ENCODE measurements at regions of chr14 and their contacts with region 1.

Region 1: DNA sequence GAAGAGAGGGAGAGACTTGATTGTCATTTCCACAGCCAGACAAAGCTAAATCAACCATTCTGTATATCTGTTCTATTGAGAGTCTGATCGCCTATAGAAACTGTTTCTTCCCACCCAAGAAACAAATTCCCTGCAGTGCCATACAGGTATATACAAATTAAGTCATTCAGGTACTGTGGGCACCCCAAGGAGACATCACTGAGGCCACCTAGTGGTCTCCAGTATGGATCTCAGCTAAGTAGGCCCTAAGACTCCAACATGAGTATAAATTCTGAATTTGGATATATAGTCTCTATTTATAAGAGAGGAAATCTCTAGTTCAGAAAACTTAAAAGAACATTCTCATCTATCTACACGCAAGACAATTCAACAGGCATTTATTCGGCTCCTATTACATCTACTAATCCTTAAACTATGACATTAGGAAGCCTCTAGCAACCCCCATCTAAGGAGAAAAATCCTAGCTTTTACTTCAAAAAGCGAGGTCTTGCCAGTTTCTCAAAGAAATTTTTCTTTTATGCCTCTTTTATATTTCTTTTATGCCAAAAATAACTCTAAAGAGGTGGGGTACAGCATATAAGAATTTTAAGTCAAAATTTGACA is 62.6 kb downstream of the DCAF5 start:
- DNase-seq: no peak
- H3K4me3 ChIP-seq: no peak overlapping the region
- CTCF ChIP-seq: peak; percentile 70

Region 2: GRCh38 chr14:68862954-68863594 is 227.2 kb before region 1 on chr14:
- CTCF ChIA-PET with region 1: interaction called, 22 read pairs
- POLR2A ChIA-PET with region 1: no interaction called
- DNase-seq: peak; percentile 16
- H3K4me3 ChIP-seq: no peak overlapping the region
- CTCF ChIP-seq: peak; percentile 81

Region 3: DNA sequence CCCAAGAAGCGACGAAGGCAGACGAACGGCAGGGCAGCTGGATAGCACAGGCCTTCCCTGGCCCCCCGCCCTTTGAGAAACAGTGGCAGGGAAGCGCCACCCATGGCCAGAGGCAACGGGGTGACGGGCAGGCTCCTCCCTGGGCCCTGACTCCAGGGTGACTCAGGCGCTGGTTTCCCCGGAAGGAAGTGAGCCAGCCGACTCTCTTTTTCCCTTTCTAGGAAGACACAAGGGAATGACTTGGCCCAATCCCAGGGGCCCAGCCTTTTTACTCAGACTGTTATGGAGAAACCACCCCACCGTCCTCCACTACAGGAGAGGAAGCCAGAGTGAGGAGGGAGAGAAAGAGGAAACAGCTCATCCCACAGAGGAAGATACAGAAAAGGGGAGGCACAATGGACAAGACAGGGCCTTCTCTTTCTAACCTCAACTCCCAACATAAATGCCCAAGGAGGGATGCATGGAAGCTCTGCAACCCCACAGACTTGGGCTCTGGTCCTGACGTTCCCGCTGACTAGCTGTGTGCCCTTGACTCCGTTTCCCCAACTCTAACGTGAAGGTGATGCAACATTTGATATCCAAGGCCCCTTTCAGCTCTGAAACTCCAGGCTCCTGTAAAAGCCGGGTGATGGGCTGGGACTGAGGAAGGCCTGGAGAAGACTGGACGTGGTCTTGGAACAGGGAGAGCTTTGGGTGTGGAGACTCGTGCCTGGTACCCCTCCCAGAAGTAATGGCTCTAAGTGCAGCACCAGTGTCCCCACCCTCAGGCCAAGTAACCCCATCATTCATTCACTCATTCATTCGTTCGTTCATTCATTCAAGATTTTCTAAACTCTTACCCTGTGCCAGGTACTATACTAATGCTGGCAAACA is 139.0 kb before region 1 on chr14:
- CTCF ChIA-PET with region 1: interaction called, 14 read pairs
- POLR2A ChIA-PET with region 1: no interaction called
- DNase-seq: no peak
- H3K4me3 ChIP-seq: no peak overlapping the region
- CTCF ChIP-seq: no peak

Region 4: GRCh38 chr14:68977718-68978171 is 112.5 kb before region 1 on chr14:
- CTCF ChIA-PET with region 1: interaction called, 16 read pairs
- POLR2A ChIA-PET with region 1: interaction called, 11 read pairs
- DNase-seq: peak; percentile 89
- H3K4me3 ChIP-seq: peak overlapping the region; percentile 98
- CTCF ChIP-seq: peak; percentile 40

Region 5: GRCh38 chr14:69055999-69056788 is 34.1 kb before region 1 on chr14:
- CTCF ChIA-PET with region 1: interaction called, 15 read pairs
- POLR2A ChIA-PET with region 1: no interaction called
- DNase-seq: no peak
- H3K4me3 ChIP-seq: no peak overlapping the region
- CTCF ChIP-seq: peak; percentile 9

Region 6: GRCh38 chr14:69079183-69079742 is 11.0 kb before region 1 on chr14:
- CTCF ChIA-PET with region 1: interaction called, 44 read pairs
- POLR2A ChIA-PET with region 1: interaction called, 3 read pairs
- DNase-seq: no peak
- H3K4me3 ChIP-seq: no peak overlapping the region
- CTCF ChIP-seq: no peak

Region 7: DNA sequence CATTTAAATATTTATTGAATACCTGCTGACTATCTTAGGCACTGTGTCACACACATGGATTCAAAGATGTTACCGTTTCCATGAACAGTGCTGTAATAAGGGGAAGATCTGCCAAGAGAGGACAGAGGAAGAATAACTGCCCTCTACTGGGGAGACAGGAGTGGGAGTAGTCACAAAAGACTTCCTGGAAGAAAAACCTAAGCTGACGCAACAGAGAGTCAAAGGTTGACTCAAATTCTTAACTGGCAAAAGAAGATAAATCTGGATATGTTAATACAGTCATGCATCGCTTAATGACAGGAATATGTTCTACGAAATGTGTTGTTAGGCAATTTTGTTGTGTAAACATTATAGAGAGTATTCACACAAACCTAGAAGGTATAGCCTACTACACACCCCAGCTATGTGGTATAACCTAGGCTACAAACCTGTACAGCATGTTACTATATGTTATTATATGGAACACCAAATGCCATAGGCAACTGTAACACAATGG is 11.1 kb after region 1 on chr14:
- CTCF ChIA-PET with region 1: interaction called, 24 read pairs
- POLR2A ChIA-PET with region 1: no interaction called
- DNase-seq: peak; percentile 42
- H3K4me3 ChIP-seq: no peak overlapping the region
- CTCF ChIP-seq: peak; percentile 60

Measured in AG04449 (cell line).